ENCODE measurements at regions of chr22 and their contacts with region 1.

Region 1: GRCh38 chr22:45537734-45538181 is 35.1 kb downstream of the FBLN1 start:
- DNase-seq: peak; percentile 100
- H3K4me3 ChIP-seq: no peak overlapping the region
- H3K27ac ChIP-seq: peak overlapping the region; percentile 100
- H3K4me1 ChIP-seq: peaks cover 25% of the 10 kb centered on the region
- H3K27me3 ChIP-seq: no peaks in the 10 kb centered on the region
- CTCF ChIP-seq: no peak

Region 2: DNA sequence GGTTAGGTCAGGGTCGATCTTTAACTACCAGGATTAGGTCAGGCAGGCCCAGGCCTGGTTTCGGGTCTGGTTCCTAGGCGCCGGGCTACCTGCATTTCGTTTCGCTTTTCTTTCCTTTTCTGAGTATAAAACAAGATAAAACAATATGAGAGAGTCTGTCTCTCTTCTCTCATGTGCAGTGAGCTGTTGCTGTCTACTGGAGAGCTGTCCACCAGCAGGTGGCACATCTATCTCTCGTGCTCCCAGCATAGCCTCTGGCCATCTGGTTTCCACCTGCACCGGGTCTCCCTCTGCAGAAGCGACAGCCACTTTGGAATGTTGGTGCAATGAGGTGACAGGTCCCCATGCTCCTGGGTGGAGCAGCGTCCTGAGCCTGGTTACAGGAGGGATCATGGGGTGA is 96.6 kb before region 1 on chr22:
- CTCF ChIA-PET with region 1: interaction called, 14 read pairs
- dilution Hi-C with region 1: no loop called
- in situ Hi-C with region 1: no loop called
- intact Hi-C with region 1: no loop called
- DNase-seq: peak; percentile 46
- H3K4me3 ChIP-seq: no peak overlapping the region
- H3K27ac ChIP-seq: no peak overlapping the region
- H3K4me1 ChIP-seq: no peaks in the 10 kb centered on the region
- H3K27me3 ChIP-seq: no peaks in the 10 kb centered on the region
- CTCF ChIP-seq: peak; percentile 55 to 79

Region 3: DNA sequence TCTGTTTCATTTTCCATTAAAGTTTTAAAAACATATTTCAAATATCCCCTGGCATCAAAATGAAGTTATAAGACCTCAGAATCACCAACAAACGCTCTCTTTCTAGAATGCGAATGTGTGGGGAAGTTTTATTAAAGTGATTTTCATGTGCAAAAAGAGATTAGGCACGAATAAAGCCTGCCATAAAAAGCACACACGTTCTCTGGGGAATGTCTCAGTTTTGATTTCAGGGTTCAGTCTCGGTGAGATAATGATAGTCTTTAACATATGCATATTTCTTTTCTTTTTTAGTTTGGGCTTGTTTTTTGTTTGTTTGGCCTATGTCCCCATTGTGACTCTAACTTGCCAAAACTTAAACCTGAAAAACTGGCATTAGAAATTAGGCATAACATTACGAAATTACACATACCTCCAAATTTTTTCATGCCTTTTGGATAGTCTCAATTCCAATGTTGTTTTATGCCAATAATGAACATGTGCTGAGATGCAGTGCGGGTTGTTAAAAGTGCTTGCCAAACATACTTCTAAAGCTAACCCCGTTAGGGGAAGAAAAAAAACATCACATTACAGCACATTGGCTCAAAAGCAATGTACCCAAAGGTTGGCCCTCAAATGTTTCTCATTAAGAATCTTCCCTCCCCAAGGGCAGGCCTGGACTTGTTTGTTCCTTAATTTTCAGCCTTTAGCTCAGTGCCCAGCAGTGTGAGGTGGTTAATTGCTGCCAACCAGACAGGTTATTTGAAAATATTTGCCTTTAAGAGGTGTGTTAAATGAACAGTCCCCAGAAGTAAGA is 68.3 kb before region 1 on chr22:
- CTCF ChIA-PET with region 1: no interaction called
- dilution Hi-C with region 1: loop called (anchors 10 kb)
- in situ Hi-C with region 1: no loop called
- intact Hi-C with region 1: loop called (anchors 5 kb)
- DNase-seq: peak; percentile 78
- H3K4me3 ChIP-seq: peak overlapping the region in 2 of 3 experiments; percentile 1 to 16
- H3K27ac ChIP-seq: peak overlapping the region; percentile 77
- H3K4me1 ChIP-seq: peaks cover 20% of the 10 kb centered on the region
- H3K27me3 ChIP-seq: no peaks in the 10 kb centered on the region
- CTCF ChIP-seq: no peak

Region 4: GRCh38 chr22:45502215-45503049 is 35.3 kb before region 1 on chr22 and contains the start of gene FBLN1:
- CTCF ChIA-PET with region 1: no interaction called
- dilution Hi-C with region 1: no loop called
- in situ Hi-C with region 1: no loop called
- intact Hi-C with region 1: loop called (anchors 1 kb)
- DNase-seq: no peak
- H3K4me3 ChIP-seq: peak within 1 kb of the TSS; percentile 55 to 72 (median 69)
- H3K27ac ChIP-seq: peak within 1 kb of the TSS; percentile 22
- H3K4me1 ChIP-seq: peaks cover 22% of the 10 kb centered on the region
- H3K27me3 ChIP-seq: no peaks in the 10 kb centered on the region
- CTCF ChIP-seq: peak in 1 of 2 donors; percentile 38
- total RNA-seq, gene FBLN1: 130 to 173 TPM

Region 5: GRCh38 chr22:45516923-45517675 is 20.7 kb before region 1 on chr22:
- CTCF ChIA-PET with region 1: no interaction called
- dilution Hi-C with region 1: no loop called
- in situ Hi-C with region 1: no loop called
- intact Hi-C with region 1: loop called (anchors 1 kb)
- DNase-seq: peak; percentile 86
- H3K4me3 ChIP-seq: no peak overlapping the region
- H3K27ac ChIP-seq: peak overlapping the region; percentile 43
- H3K4me1 ChIP-seq: peaks cover 43% of the 10 kb centered on the region
- H3K27me3 ChIP-seq: no peaks in the 10 kb centered on the region
- CTCF ChIP-seq: no peak

Measured in mammary epithelial cell (primary cell).